ENCODE measurements at regions of chr11 and their contacts with region 1.

Region 1: DNA sequence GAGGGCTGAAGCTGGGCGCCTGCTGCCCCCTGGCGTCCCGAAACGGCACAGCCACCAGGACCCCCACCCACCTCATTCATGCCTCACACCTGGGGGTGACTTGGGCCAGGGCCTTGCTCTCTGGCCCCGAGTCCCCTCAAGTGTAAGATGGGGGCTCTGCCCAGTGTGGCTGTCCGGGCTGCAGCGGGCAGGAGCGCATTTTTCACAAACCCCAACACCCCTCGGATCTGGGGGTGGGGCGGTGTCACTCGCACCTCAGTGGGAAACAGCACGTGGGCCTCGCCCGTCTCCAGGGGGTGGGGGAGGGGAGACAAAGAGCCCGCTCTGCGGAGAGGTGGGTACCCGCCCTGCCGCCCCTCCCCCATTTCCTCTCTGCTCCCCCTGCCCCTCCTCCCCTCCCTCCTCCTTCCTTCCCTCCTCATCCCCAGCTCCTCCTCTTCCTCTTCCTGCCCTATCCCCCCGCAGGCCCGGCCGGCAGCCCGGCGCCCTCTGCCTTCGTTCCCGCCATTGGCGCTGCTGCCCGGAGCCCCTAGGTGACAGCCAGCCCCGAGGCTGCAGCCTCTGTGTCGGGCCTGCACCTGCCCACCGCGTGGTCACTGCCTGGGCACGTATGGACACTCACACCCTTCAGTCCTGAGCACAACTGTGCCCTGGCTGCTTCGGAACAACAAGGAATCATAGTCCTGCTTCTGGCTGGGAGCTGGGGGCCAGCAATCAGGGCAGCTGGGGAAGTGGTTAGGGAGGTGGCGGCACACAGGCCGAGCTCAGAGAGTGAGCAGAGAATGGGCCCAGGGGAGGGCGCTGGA is 6.8 kb upstream of the CDKN1C start:
- DNase-seq: peak; percentile 70 to 80 (median 78)
- H3K4me3 ChIP-seq: peak overlapping the region; percentile 37
- H3K27ac ChIP-seq: peak overlapping the region; percentile 73 to 85
- H3K4me1 ChIP-seq: peaks cover 15% of the 10 kb centered on the region
- H3K27me3 ChIP-seq: no peaks in the 10 kb centered on the region
- CTCF ChIP-seq: peak; percentile 97 to 99 (median 98)
- EP300 ChIP-seq: no peak
- POLR2A ChIP-seq: no peak

Region 2: DNA sequence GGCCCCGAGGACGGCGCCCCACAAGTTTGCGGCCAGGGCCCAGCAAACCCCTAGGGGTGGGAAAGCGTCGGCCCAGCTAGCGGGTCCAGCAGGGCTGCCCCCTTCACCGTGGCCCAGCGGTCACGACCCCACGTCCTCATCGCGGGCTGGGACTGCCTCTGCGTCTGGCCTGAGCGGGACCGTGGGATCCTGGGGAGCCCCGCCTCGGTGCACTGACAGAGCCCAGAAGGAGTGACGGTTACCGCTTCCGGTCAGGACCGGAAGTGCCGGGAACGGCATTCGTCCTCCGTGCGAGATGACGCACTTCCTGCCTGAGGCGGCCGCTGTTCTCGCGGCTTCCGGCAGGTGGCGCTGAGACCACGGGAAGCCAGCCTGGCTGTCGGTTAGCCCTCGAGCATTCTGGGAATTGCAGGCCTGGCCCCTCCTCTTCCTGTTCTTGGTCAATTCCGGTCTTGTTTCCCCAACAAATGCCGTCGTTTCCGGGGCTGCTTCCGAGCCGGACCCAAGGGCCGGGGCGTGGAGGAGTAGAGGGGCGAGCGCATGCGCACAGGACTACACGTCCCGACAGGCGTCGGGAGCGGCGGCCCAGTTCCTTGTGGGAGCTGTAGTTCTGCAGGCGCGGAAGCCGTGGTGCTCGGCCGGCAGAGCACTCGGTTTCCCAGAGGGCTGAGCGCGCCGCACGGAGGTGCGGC is 492.2 kb before region 1 on chr11 and contains the start of gene TSSC4:
- intact Hi-C with region 1: loop called in 1 of 4 experiments (anchors 10 kb)
- DNase-seq: peak; percentile 99 to 100 (median 100)
- H3K4me3 ChIP-seq: peak within 1 kb of the TSS; percentile 85
- H3K27ac ChIP-seq: peak within 1 kb of the TSS; percentile 80 to 98
- H3K4me1 ChIP-seq: peaks cover 4% of the 10 kb centered on the region
- H3K27me3 ChIP-seq: no peaks in the 10 kb centered on the region
- CTCF ChIP-seq: peak; percentile 97 to 99 (median 98)
- EP300 ChIP-seq: peak; percentile 99
- POLR2A ChIP-seq: peak; percentile 98
- total RNA-seq, gene TSSC4: 37.1 to 73.4 (median 49.4) TPM

Region 3: GRCh38 chr11:2409611-2410468 is 482.6 kb before region 1 on chr11:
- intact Hi-C with region 1: loop called in 2 of 4 experiments (anchors 5 to 10 kb)
- DNase-seq: no peak
- H3K4me3 ChIP-seq: no peak overlapping the region
- H3K27ac ChIP-seq: no peak overlapping the region
- H3K4me1 ChIP-seq: no peaks in the 10 kb centered on the region
- H3K27me3 ChIP-seq: no peaks in the 10 kb centered on the region
- CTCF ChIP-seq: no peak
- EP300 ChIP-seq: no peak
- POLR2A ChIP-seq: no peak

Region 4: DNA sequence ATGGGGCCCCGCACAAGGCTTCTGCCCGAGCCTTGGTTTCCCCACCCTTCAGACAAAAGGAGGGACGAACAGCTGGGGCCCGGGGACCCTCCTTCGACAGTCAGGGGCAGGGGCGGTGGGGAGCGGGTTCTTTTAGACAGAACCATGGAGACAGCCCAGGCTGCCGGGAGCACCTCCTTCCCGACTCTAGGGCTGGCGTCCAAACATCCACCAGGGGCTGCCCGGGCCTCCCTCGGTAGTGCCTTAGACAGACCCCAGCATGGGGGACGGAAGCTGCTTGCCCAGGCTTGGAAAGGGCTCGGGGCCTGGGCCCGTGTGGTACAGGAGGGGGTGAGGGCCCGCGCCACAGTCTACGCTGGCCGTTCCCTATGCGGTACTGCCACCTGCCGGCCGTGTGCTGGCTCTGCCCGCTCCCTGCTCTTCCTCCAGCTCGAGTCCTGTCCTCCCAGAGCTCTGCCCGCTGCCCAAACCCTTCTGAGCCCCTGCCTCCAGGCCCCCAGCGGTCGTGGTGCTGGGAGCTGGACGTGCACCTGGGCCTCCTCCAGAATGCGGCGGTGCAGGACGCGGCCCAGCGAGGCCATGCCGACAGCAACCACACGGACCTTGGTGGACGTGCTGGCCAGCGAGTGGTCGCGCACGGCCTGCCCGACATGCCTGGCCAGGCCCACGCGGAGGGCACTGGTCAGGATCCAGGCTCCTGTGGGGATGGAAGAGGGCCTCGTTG is 471.8 kb before region 1 on chr11:
- intact Hi-C with region 1: loop called in 1 of 4 experiments (anchors 10 kb)
- DNase-seq: peak; percentile 66 to 86 (median 75)
- H3K4me3 ChIP-seq: no peak overlapping the region
- H3K27ac ChIP-seq: no peak overlapping the region
- H3K4me1 ChIP-seq: peaks cover 2% of the 10 kb centered on the region
- H3K27me3 ChIP-seq: no peaks in the 10 kb centered on the region
- CTCF ChIP-seq: peak; percentile 90 to 94 (median 92)
- EP300 ChIP-seq: no peak
- POLR2A ChIP-seq: peak; percentile 11

Region 5: DNA sequence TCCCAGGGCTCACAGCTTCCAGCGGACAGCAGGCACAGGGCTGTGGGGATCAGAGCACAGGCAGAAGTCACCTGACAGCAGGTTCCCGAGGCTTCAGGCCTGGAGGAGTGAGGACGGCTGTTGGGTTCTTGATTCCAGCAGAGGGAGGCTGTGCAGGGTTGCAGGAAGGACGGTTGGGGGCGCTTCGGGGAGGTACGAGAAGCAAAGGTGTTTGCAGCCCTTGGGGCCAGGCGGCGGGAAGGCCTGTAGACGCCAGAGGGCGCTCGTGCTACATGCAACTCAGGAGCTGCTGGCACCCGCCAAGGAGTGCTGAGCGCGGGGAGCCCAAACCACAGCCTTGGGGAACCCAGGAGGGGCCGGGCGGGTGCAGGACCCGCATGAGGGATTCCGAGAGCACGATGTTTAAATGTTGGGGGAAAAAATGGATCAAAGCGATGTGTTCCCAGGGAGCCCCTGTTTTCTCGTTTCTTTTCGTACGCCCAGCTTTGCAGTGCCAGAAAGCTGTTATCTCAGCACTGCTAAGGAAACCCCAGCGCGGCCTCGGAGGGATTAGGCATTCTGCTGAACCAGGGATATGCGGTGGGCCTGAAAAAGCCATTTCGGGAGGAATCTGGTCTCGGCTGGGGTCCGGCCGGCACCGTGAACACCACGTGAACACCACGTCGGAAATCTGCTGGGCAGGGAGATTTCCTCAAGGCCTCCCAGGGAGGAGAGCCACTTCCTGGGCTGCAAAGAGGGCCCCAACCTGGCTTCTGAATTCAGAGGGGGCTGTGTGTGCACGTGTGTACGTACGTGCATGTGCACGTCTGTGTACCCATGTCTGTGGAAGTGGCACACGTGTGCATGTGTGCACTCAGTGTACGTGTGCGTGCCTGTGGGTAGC is 359.5 kb before region 1 on chr11:
- intact Hi-C with region 1: loop called (anchors 1 to 2 kb)
- DNase-seq: peak; percentile 92 to 97 (median 96)
- H3K4me3 ChIP-seq: peak overlapping the region; percentile 14
- H3K27ac ChIP-seq: peak overlapping the region in 1 of 2 donors; percentile 39
- H3K4me1 ChIP-seq: peaks cover 7% of the 10 kb centered on the region
- H3K27me3 ChIP-seq: no peaks in the 10 kb centered on the region
- CTCF ChIP-seq: peak; percentile 98 to 99 (median 99)
- EP300 ChIP-seq: no peak
- POLR2A ChIP-seq: peak; percentile 42

Measured in ovary (tissue), 10 donors.